ENCODE measurements at regions of chr11 and their contacts with region 1.

Region 1: DNA sequence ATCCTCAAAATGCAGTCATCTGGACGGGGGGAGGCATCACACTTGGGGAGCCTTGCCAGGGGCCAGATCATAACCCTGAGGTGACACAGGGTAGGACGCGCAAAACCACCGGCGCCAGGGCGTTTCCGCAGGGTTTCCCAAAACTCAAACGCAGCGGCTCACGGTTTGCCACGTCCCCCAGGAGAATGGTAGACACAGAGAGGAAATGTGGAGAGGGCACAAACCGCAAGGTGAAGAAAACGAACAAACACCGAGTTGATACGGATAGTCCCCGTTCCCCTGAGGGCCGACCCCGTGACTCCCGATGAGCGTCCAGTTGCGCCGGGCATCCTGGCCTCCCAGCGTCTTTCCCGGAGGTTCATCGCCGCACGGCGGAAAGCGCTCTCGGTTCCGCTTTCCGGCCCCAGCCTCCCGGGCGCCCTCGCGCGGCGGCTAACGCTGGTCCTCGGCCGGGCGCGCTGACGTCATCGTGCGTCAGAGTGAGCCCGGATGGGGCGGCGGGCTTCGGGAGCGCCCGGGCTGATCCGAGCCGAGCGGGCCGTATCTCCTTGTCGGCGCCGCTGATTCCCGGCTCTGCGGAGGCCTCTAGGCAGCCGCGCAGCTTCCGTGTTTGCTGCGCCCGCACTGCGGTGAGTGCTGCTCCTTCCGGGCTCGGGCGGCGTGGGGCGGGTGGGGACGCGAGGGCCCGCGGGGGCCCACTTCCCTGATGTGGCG is at the start of gene BIRC2:
- DNase-seq: peak; percentile 94 to 98 (median 97)
- H3K4me3 ChIP-seq: peak within 1 kb of the TSS; percentile 62
- H3K27ac ChIP-seq: peak within 1 kb of the TSS; percentile 98 to 99
- H3K4me1 ChIP-seq: peaks cover 2% of the 10 kb centered on the region
- H3K27me3 ChIP-seq: no peaks in the 10 kb centered on the region
- CTCF ChIP-seq: peak; percentile 75 to 97 (median 94)
- EP300 ChIP-seq: peak; percentile 3
- POLR2A ChIP-seq: peak; percentile 95
- total RNA-seq, gene BIRC2: 27.1 to 57.8 (median 33.6) TPM

Region 2: GRCh38 chr11:102287964-102288724 is 58.8 kb before region 1 on chr11:
- intact Hi-C with region 1: loop called in 2 of 4 experiments (anchors 10 kb)
- DNase-seq: peak in 4 of 5 donors; percentile 38 to 51 (median 47)
- H3K4me3 ChIP-seq: peak overlapping the region; percentile 21
- H3K27ac ChIP-seq: peak overlapping the region in 1 of 2 donors; percentile 5
- H3K4me1 ChIP-seq: peaks cover 9% of the 10 kb centered on the region
- H3K27me3 ChIP-seq: no peaks in the 10 kb centered on the region
- CTCF ChIP-seq: peak; percentile 60 to 73 (median 66)
- EP300 ChIP-seq: no peak
- POLR2A ChIP-seq: no peak

Region 3: DNA sequence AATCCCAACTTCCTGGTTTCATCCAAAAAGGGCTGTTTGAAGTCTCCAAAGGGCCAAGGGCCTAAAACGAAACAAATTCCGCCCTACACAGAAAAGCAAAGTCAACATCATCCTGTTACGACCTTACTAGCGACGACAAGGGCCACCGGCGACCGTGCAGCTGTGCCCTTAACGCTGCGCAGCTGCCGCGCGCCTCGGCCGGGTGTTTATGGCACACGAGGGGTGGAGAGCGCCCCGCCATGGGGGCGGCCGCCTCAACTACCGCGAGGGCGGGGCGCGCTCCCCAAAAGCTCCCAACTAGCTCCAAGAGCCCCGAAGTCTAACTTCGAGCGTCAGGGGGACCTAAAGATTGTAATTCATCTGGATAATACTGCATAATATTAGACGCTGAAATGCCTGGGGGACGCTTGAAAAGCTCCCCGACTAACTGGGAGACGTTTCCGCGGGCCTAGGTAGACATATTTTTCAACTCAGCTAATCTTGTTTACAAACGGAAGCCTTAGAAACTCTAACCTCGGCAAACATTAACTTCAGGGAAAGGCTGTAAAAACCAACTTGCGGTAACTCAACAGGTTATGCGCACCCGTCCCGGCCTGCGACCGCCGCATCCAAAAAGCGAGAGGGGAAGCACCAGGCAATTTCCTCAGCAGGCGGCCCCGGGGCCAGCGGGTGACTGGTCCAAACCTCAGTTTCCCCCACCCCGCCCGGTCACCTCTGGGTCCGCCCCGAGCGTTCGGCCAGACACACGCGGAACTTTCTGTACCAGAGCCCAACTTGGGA is 105.0 kb after region 1 on chr11:
- intact Hi-C with region 1: loop called in 1 of 4 experiments (anchors 10 kb)
- DNase-seq: peak; percentile 53 to 74 (median 65)
- H3K4me3 ChIP-seq: peak overlapping the region; percentile 96
- H3K27ac ChIP-seq: peak overlapping the region; percentile 79 to 89
- H3K4me1 ChIP-seq: peaks cover 8% of the 10 kb centered on the region
- H3K27me3 ChIP-seq: no peaks in the 10 kb centered on the region
- CTCF ChIP-seq: no peak
- EP300 ChIP-seq: no peak
- POLR2A ChIP-seq: no peak

Measured in ovary (tissue), 10 donors.